Spleen (tissue), 13 donors: ENCODE measurements at regions of chr4 and their contacts with region 1.

Region 1: DNA sequence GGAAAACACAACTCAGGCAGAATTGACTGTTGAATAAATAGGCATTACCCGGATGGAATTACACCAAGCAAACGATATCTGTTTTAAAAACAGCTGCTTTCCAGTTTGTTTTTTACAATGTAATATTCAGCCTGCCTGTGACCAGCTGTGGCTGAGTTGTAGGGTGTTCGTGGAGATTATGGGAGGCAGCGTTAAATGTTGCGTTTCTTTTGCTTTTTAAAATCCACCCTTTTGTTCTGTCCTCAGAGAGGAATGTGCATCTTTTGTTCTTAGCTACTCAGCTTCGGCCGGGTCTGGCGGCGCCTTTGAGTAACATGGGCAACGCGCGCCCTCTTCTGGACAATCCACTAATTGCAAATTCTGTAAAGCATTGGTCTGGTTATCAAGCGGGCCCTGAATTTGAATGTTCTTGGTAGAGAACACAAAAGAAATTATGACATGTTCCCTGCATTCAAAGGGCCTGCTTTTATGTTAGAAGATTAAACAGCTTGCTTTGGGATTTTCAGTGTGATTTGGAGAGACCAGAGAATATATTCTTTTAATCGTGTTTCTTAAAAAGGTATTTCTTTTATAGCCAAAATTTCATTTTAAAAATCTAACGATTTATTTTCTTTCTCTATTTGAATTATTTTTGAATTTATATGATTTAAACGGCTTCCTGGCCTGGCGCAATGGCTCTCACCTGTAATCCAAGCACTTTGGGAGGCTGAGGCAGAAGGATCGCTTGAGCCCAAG is 76.3 kb upstream of the TRIM2 start:
- DNase-seq: peak; percentile 93
- H3K4me3 ChIP-seq: no peak overlapping the region
- H3K27ac ChIP-seq: no peak overlapping the region
- H3K4me1 ChIP-seq: peaks cover 0 to 6% (median 4%) of the 10 kb centered on the region in 6 donors
- H3K27me3 ChIP-seq: no peaks in the 10 kb centered on the region
- CTCF ChIP-seq: peak; percentile 69 to 92 (median 84)
- POLR2A ChIP-seq: no peak

Region 2: GRCh38 chr4:152849350-152849749 is 278.6 kb before region 1 on chr4:
- intact Hi-C with region 1: loop called (anchors 5 kb)
- DNase-seq: no peak
- H3K4me3 ChIP-seq: no peak overlapping the region
- H3K27ac ChIP-seq: peak overlapping the region in 1 of 8 donors; percentile 78
- H3K4me1 ChIP-seq: peaks cover 5 to 31% (median 19%) of the 10 kb centered on the region in 6 donors
- H3K27me3 ChIP-seq: no peaks in the 10 kb centered on the region
- CTCF ChIP-seq: no peak
- POLR2A ChIP-seq: no peak

Region 3: DNA sequence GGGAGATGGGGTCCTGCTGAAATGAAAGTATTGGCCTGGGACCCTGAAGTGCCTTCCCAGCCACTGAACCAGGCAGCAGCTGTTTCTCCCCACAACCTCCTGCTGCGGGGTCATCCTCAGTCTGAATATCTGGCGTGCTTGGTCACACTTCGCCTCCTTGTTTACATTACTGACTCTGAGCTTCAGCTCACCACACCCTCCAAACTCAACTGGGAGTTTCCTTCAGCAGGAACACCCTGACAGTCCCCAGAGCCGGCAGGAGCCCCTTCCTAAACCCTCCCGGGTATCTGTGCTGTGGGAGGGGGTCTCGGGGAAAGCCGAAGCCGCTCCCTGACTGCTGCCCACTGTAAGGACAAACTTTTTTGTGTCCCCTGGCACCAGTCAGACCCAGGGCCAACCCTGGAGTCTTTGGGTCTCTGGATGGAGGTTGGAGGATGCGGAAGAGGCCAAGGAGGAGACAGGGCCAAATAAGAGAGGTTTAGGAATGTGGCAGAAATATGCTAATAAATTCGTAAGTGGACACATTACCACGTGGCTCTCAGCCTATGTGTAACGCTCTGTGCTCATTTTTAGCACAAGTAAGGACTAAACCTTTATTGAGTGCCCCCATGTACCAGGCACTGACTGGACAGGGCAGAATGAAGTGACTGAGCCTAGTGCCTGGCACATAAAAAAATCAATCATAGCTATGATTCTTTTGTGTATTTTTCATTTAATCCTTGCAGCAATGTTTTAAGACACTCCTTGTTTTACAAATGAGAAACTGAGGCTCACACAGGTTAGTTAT is 171.1 kb before region 1 on chr4:
- intact Hi-C with region 1: loop called (anchors 10 kb)
- DNase-seq: no peak
- H3K4me3 ChIP-seq: no peak overlapping the region
- H3K27ac ChIP-seq: peak overlapping the region in 7 of 8 donors; percentile 67 to 80 (median 74)
- H3K4me1 ChIP-seq: peaks cover 0 to 42% (median 29%) of the 10 kb centered on the region in 6 donors
- H3K27me3 ChIP-seq: no peaks in the 10 kb centered on the region
- CTCF ChIP-seq: no peak
- POLR2A ChIP-seq: no peak

Region 4: GRCh38 chr4:153083447-153083947 is 44.4 kb before region 1 on chr4:
- intact Hi-C with region 1: loop called (anchors 2 kb)
- DNase-seq: peak; percentile 77
- H3K4me3 ChIP-seq: no peak overlapping the region
- H3K27ac ChIP-seq: peak overlapping the region in 2 of 8 donors; percentile 0 to 34
- H3K4me1 ChIP-seq: peaks cover 19 to 42% (median 29%) of the 10 kb centered on the region in 6 donors
- H3K27me3 ChIP-seq: no peaks in the 10 kb centered on the region
- CTCF ChIP-seq: peak; percentile 17 to 80 (median 65)
- POLR2A ChIP-seq: no peak

Region 5: DNA sequence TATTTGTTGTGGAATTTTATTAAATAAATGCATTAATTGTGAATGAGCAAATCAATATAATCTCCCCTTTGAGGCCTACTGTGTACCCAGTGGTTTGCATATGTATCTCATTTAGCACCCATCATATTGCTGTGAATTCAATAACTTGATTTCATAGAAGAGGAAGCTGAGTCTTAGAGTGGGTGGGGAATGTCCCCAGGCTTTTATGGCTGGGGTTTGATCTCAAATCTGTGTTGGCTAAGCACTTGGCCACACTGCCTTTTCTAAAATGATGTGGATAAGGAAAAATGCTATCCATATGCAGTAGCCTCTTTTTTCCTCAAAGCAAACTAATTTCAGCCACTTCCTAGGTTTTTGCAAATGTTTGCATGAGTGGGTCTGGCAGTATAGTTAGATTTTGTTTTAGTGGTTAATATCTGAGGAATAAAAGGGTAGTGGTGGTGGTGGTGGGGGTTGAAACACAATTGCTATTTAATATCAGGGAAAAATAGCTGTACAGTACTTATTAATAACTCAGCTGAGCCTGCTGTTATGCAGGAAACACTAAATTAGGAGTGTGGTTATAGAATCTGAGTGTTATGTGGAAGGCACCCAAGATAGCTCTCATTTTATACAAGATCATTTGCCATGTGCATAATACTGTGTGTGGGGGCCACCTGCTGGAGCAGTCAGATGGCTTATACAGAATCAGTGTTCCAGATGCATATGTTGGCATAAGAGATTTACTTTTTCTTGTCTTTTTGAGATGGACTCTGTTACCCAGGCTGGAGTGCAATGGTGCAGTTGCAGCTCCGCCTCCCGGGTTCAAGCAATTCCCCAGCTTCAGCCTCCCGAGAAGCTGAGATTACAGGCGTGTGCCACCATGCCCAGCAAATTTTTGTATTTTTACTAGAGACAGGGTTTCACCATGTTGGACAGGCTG is 446.2 kb after region 1 on chr4:
- intact Hi-C with region 1: no loop called
- DNase-seq: peak; percentile 83
- H3K4me3 ChIP-seq: no peak overlapping the region
- H3K27ac ChIP-seq: peak overlapping the region; percentile 17 to 54 (median 38)
- H3K4me1 ChIP-seq: peaks cover 37 to 99% (median 65%) of the 10 kb centered on the region in 6 donors
- H3K27me3 ChIP-seq: no peaks in the 10 kb centered on the region
- CTCF ChIP-seq: peak; percentile 41 to 72 (median 60)
- POLR2A ChIP-seq: no peak

Region 6: GRCh38 chr4:153976954-153977353 is 849.0 kb after region 1 on chr4:
- intact Hi-C with region 1: no loop called
- DNase-seq: no peak
- H3K4me3 ChIP-seq: no peak overlapping the region
- H3K27ac ChIP-seq: no peak overlapping the region
- H3K4me1 ChIP-seq: no peaks in the 10 kb centered on the region
- H3K27me3 ChIP-seq: no peaks in the 10 kb centered on the region
- CTCF ChIP-seq: no peak
- POLR2A ChIP-seq: no peak